OCI-LY7 (cell line): ENCODE measurements at regions of chr11 and their contacts with region 1.

Region 1: GRCh38 chr11:95089620-95090542 is at the start of gene ENDOD1:
- DNase-seq: peak; percentile 88
- H3K4me3 ChIP-seq: peak within 1 kb of the TSS; percentile 82
- H3K27ac ChIP-seq: peak within 1 kb of the TSS; percentile 47
- H3K4me1 ChIP-seq: peaks cover 55% of the 10 kb centered on the region
- CTCF ChIP-seq: 0 out of 2 replicates have a peak, but pooled peaks have one; percentile 10
- total RNA-seq, gene ENDOD1: 18.5 and 20.4 TPM in 2 replicates

Region 2: GRCh38 chr11:95102733-95103132 is 12.9 kb after region 1 on chr11:
- CTCF ChIA-PET with region 1: interaction called, 10 read pairs
- POLR2A ChIA-PET with region 1: interaction called, 18 read pairs
- intact Hi-C with region 1: no loop called
- DNase-seq: no peak
- H3K4me3 ChIP-seq: no peak overlapping the region
- H3K27ac ChIP-seq: no peak overlapping the region
- H3K4me1 ChIP-seq: peaks cover 30% of the 10 kb centered on the region
- CTCF ChIP-seq: no peak

Region 3: DNA sequence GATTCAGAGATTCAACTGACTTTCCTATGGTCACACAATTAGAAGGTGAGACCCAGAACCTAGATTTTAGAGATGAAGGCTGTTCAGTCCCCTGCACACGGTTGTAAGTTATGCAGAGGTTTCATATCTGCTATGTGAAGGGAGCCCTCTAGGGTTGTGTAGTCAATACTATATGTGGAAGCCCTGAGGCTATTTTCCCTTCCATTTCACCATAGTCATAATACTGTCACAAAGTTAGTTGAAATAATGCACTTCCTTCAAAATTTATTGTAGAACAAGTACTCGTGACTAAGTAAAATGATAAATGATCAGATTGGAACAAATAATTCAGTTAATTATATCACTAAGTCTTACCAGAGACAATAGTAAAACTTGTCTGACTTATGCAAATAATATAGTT is 48.6 kb after region 1 on chr11:
- CTCF ChIA-PET with region 1: interaction called, 3 read pairs
- POLR2A ChIA-PET with region 1: interaction called, 4 read pairs
- intact Hi-C with region 1: loop called (anchors 2 kb)
- DNase-seq: peak; percentile 64
- H3K4me3 ChIP-seq: no peak overlapping the region
- H3K27ac ChIP-seq: no peak overlapping the region
- H3K4me1 ChIP-seq: no peaks in the 10 kb centered on the region
- CTCF ChIP-seq: peak; percentile 81

Region 4: GRCh38 chr11:95254131-95254704 is 164.3 kb after region 1 on chr11:
- CTCF ChIA-PET with region 1: no interaction called
- POLR2A ChIA-PET with region 1: interaction called, 3 read pairs
- intact Hi-C with region 1: loop called (anchors 5 kb)
- DNase-seq: peak; percentile 96
- H3K4me3 ChIP-seq: peak overlapping the region; percentile 45
- H3K27ac ChIP-seq: peak overlapping the region; percentile 85
- H3K4me1 ChIP-seq: peaks cover 66% of the 10 kb centered on the region
- CTCF ChIP-seq: no peak

Region 5: DNA sequence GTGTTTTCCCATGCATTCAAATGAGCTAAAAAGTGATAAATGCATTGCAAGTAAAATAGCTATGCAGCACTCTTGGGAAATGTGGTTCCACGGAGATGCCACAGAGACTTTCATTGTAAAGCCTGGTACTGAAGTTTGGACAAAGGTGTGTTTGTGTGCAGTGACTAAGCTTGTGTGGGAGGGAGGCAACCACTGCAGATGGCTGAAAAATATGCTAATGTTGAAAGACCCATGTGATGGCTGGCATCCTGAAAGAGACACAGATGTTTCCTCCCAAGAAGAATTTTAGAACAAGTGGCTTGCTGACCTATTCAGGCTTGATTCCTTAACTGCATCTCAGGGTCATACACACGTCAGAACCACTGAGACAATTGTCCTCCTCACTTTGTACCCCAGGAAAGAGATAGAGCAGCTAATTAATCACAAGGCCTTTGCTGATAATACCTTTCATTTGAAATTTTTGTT is 625.9 kb after region 1 on chr11:
- CTCF ChIA-PET with region 1: no interaction called
- POLR2A ChIA-PET with region 1: interaction called, 3 read pairs
- intact Hi-C with region 1: loop called (anchors 5 kb)
- DNase-seq: peak; percentile 85
- H3K4me3 ChIP-seq: peak overlapping the region; percentile 49
- H3K27ac ChIP-seq: peak overlapping the region; percentile 78
- H3K4me1 ChIP-seq: peaks cover 59% of the 10 kb centered on the region
- CTCF ChIP-seq: no peak

Region 6: GRCh38 chr11:96091476-96091875 is 1001.6 kb after region 1 on chr11:
- CTCF ChIA-PET with region 1: no interaction called
- POLR2A ChIA-PET with region 1: no interaction called
- intact Hi-C with region 1: no loop called
- DNase-seq: peak; percentile 64
- H3K4me3 ChIP-seq: no peak overlapping the region
- H3K27ac ChIP-seq: no peak overlapping the region
- H3K4me1 ChIP-seq: no peaks in the 10 kb centered on the region
- CTCF ChIP-seq: peak; percentile 69

Region 7: GRCh38 chr11:96215110-96215782 is 1125.4 kb after region 1 on chr11:
- CTCF ChIA-PET with region 1: no interaction called
- POLR2A ChIA-PET with region 1: no interaction called
- intact Hi-C with region 1: loop called (anchors 10 kb)
- DNase-seq: peak; percentile 93
- H3K4me3 ChIP-seq: peak overlapping the region; percentile 36
- H3K27ac ChIP-seq: peak overlapping the region; percentile 88
- H3K4me1 ChIP-seq: peaks cover 76% of the 10 kb centered on the region
- CTCF ChIP-seq: no peak